ENCODE measurements at regions of chr7 and their contacts with region 1.

Region 1: DNA sequence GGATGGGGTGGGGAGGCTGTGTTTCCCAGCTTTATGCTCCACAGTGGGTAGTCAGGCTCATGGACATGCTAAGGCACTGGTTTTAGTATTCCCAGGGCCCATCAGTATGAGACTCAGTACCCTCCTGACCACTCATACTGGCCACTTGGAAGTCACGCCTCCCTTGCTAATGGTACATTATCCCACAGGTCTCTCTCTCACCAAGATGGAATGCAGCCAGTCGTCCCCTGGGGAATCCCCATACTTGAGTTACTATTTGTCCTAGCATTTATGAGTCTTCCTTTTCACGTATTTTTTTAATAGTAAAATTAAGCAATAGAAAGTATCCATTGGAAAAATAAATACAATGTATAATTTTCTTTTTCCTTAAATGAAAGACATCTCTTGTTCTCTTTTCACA is 80.6 kb upstream of the TBX20 start:
- DNase-seq: peak; percentile 41

Region 2: DNA sequence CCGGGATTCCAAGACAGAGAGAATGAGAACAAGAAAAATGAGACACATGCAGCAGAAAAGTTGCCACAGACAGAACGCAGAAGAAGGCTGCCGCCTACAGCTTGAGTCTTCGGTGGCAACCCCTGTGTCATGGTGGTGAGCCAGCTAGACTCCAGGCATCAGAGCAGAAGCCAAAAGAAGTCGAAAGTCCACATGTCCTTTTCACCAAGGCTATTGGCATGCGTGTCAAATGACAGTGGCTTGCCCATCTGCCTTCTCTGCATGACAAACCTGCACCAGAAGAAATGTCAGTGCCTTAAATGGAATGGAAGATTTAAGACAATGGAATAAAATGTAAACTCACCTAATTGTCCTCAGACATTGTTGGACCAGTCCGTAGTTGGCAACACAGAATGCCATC is 770.4 kb before region 1 on chr7:
- in situ Hi-C with region 1: no loop called
- DNase-seq: no peak

Region 3: GRCh38 chr7:35391091-35391490 is 56.6 kb after region 1 on chr7:
- in situ Hi-C with region 1: no loop called
- DNase-seq: no peak

Region 4: GRCh38 chr7:35424869-35425495 is 90.5 kb after region 1 on chr7:
- in situ Hi-C with region 1: loop called (anchors 25 kb)
- DNase-seq: peak; percentile 75